ENCODE measurements at regions of chr3 and their contacts with region 1.

Region 1: DNA sequence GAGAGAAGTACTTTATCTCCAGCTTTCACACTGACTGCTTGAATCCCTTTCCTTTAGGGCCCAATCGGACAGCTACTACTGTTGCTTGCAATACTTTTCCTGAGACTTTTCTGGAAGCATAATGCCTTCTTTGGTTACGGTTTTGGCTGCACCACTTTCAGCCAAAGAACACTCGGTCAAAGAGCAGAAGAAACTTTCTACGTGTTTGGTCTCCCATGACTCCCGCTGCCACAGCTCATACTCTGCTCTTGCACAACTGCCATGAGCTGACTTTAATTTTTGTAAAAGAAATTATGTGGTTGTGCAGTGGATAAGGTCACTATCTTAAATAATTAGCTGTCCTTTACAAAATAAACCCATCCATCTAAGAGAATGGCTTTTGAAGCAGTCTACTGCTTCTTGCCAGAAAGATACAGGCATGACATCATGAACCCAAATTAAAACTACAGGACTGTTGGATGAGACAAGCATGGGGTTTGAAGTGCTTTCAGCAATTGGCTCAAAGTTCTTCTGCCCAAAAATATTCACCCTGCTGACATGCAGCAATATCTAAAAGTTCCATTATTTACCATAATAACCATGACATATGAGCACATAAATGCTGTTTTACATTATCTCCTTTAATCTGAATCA is 42.0 kb downstream of the PROS1 start:
- DNase-seq: no peak

Region 2: DNA sequence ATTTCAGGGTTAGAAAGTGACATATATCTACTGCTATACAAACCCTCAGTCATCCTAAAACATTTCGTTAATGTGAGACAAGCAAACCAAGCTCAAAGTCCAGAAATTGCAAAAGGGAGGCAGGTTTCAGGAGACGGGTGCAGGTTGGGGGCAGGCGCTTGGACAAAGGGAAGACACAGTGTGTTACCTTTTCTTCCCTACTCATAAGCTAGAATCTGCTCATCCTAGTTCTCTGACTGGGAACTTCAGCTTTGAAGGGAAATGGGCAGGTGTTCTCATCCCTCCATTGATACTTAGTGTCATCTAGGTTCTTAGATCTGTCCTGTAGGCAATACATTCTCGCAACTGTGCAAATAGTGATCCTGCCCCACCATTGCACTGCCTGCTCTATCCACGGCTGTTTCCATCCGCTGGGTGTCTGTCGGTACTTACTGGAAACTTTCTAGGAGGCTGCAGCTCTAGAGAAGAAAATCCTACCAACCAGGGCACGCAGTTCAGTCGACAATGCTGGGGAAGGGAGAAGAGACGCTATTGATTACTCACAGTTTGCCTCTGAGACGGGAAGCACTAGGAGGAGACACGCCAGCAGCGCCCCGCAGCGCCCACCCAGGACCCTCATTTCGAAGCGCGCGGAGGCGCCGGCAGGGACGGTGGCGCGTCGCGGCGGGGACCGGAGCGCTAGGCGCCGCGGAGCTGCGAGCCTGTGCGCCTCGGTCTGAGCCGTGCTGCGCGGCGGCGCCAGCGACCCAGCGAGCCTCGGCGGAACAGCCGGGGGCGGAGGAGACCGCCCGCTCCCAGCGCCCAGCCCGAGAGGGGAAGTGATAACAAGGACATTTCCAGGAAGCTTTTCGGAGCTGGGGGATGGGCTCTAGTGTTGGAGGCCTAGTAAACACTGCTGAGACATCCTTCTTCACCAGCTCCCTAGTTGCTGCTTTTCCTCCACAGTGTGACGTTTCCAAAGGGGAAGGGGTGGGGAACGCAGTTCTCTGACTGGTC is 41.7 kb after region 1 on chr3 and contains the start of gene PROS1:
- intact Hi-C with region 1: loop called (anchors 2 kb)
- DNase-seq: peak; percentile 92
- total RNA-seq, gene PROS1: 275 TPM

Region 3: GRCh38 chr3:93984618-93985017 is 52.9 kb after region 1 on chr3:
- intact Hi-C with region 1: no loop called
- DNase-seq: no peak

Region 4: DNA sequence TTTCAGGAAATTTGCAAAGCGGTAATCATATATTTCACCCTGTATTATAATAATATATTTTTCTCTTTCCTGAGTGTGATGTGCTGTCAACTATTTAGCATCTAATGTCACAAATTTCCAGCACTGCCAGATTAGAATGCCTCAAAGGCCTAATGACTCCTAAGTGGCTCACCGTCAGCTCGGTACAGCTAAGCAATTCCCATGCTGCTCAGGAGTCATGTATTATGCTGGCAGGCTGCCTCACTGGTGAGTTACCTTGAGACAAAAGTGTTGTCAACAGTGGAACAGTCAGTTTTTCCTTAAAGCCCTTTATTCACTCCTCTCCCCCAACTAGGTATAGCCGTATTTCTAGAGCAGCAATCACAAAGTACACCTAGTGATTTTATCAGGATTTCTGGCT is 214.7 kb after region 1 on chr3:
- intact Hi-C with region 1: no loop called
- DNase-seq: no peak